GM13977 (cell line): ENCODE measurements at regions of chr7 and their contacts with region 1.

Region 1: DNA sequence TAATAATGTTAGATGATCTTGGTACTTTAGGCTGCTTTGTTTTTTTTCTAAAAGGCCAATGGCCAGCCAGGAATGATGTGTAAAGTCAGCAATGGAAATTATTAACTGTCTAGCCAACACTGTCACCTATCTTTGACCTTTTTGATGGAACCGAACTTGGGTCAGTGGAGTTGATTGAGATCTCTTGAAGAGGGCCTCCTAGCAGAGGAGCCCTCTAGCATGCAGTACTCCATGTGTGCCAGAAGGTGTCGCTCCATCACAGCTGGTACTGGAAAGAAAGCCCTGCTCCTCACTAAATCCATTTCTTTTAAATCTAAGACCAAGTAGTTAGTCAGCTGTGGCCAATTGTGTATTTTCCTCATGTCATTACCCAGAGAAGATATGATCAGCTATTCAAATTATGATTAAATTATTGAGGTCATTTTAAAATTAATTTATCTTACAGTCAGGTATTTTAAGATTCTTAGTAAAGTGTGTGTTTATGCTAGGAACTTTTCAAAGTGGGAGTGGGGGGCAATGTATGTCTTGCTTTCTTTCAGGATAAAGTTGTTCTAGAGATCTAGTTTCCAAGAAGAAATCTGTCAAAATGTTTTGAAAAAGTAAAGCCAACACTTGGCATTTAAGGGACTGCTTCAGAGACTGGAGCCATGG is 33.1 kb upstream of the CROT start:
- DNase-seq: peak; percentile 58
- CTCF ChIP-seq: peak; percentile 97

Region 2: GRCh38 chr7:87416682-87417587 is 104.6 kb after region 1 on chr7:
- in situ Hi-C with region 1: loop called (anchors 10 kb)
- DNase-seq: peak; percentile 31
- CTCF ChIP-seq: peak; percentile 73

Region 3: DNA sequence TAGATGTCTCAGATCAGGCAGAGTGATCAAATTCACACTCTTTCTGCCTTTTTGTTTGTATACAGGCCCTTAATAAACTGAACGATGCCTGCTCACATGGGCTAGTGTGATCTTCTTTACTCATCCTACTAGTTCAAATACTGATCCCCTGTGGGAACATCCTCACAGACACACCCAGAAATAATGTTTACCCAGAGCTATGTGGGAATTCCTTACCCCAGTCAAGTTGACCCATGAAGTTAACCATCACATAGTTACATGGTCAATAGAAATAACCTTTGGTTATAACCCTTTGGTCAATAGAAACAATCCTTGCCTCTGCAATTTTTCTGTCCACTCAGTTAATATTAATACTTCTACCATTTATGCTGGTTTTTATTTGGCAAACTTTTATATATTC is 1413.4 kb after region 1 on chr7:
- in situ Hi-C with region 1: no loop called
- DNase-seq: no peak
- CTCF ChIP-seq: no peak